OCI-LY7 (cell line): ENCODE measurements at regions of chr6 and their contacts with region 1.

Region 1: GRCh38 chr6:43228951-43229802 is at the start of gene DNPH1:
- DNase-seq: peak; percentile 80
- H3K4me3 ChIP-seq: peak within 1 kb of the TSS; percentile 78
- H3K27ac ChIP-seq: peak within 1 kb of the TSS; percentile 18
- H3K4me1 ChIP-seq: peaks cover 37% of the 10 kb centered on the region
- CTCF ChIP-seq: peak; percentile 86
- total RNA-seq, gene DNPH1: 111 and 126 TPM in 2 replicates

Region 2: DNA sequence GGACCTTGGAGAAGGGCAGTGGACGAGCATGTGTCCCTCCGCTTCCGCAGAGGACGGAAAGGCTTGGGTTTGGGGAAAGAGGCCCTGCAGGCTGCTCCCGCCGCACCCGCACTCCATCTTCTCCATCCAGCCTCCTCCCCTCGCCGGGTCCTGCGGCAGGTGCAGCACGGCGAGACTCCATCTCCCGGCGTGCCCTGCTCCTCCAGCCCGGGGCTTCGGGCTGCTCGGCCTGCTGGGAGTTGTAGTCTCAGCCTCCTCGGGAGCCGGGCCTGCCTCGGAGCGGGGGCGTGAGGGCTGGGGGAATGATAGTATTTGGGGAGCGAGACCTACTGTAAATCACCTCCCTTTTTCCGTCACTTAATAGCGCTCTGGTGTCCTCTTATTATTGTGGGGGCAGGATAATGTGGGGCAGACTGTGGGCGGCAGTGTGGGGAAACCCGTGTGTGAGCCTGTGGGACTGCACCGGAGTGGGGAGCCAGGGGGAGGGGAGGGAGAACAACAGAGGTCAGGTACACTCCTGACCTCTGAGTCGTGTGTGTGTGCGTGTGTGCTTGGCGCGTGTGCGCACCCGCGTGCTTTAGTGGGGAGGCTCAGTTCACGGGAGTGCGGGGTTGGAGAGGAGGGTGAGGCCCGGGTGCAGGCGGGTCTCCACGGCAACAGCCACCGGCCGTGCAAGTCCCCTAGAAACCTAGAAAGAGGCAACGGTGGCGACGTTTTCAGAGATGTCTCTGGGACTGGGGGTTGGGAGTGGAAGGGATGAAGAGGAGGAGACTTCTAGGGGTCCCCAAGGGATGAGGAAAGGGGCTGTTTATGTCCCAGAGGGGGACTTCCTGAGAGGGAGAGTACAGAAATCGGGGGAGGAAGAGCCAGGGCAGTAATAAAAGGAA is 18.2 kb after region 1 on chr6:
- CTCF ChIA-PET with region 1: interaction called, 12 read pairs
- POLR2A ChIA-PET with region 1: interaction called, 7 read pairs
- intact Hi-C with region 1: no loop called
- DNase-seq: peak; percentile 89
- H3K4me3 ChIP-seq: peak overlapping the region; percentile 72
- H3K27ac ChIP-seq: no peak overlapping the region
- H3K4me1 ChIP-seq: peaks cover 20% of the 10 kb centered on the region
- CTCF ChIP-seq: peak; percentile 27; the same call in 1 of the 2 replicates

Region 3: DNA sequence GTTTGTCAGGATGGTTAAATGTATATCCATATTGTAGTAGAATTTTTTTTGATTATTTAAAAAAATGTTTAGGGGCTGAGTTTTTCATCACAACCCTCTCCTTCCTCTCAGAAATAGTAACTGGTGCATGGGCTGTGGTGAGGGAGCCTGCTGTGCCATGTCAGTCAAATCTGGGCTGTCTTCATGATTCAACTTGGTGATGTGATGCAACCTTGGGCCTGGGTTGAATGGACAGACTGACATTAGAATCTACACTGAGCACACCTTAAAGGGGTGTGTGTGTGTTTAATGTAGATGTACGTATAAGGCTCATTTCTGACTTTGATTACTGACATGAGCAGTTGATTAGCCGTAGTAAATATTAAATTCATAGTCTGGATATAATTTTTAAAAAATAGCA is 251.9 kb after region 1 on chr6:
- CTCF ChIA-PET with region 1: no interaction called
- POLR2A ChIA-PET with region 1: no interaction called
- intact Hi-C with region 1: no loop called
- DNase-seq: no peak
- H3K4me3 ChIP-seq: no peak overlapping the region
- H3K27ac ChIP-seq: no peak overlapping the region
- H3K4me1 ChIP-seq: peaks cover 18% of the 10 kb centered on the region
- CTCF ChIP-seq: no peak